Activated CD4-positive, alpha-beta T cell treated with anti-CD3 and anti-CD28 coated beads for 36 hours (primary cell): ENCODE measurements at regions of chr6 and their contacts with region 1.

Region 1: GRCh38 chr6:33812669-33813068 is 8.9 kb upstream of the MLN start:
- DNase-seq: peak; percentile 67
- ATAC-seq: no peak
- H3K4me3 Mint-ChIP-seq: no peak overlapping the region
- H3K27ac Mint-ChIP-seq: no peak overlapping the region
- H3K4me1 Mint-ChIP-seq: peaks cover 15% of the 10 kb centered on the region
- H3K27me3 Mint-ChIP-seq: peaks cover 49% of the 10 kb centered on the region

Region 2: DNA sequence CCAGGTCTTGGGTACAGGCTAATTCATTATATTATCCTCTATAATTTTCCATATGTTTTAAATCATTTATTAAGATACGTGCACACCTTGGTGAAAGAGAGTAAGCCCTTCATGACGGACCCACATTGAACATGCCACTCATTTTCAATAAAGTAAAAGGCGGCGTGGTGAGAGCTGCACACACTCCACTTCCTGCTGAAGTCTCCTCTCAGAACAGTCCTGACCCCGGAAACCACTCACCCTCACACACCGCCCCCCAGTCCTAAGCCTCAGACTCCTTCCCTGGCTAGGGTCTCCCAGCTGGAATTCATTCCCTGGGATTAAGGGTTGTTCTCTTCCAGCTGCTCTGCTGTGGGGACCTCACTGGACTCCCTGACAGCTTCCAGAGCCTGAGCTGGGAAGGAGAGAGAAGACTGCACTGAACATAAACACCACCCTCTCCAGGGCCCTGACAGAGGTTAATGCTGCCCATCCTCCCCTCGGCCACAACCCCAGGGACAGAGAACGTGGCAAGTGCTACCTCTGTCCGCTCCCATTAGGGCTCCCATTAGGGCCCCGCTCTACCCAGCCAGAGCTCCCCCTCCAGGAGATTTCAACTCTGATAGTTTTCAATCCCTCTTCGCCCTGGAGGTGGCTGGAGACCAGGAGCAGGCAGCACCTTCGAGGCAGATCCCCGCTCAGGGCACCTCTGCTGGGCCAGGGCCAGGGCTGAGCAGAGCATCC is 308.4 kb after region 1 on chr6:
- CTCF ChIA-PET with region 1: no interaction called
- POLR2A ChIA-PET with region 1: no interaction called
- intact Hi-C with region 1: loop called in 1 of 2 experiments (anchors 5 kb)
- DNase-seq: no peak
- ATAC-seq: no peak
- H3K4me3 Mint-ChIP-seq: no peak overlapping the region
- H3K27ac Mint-ChIP-seq: no peak overlapping the region
- H3K4me1 Mint-ChIP-seq: no peaks in the 10 kb centered on the region
- H3K27me3 Mint-ChIP-seq: no peaks in the 10 kb centered on the region

Region 3: DNA sequence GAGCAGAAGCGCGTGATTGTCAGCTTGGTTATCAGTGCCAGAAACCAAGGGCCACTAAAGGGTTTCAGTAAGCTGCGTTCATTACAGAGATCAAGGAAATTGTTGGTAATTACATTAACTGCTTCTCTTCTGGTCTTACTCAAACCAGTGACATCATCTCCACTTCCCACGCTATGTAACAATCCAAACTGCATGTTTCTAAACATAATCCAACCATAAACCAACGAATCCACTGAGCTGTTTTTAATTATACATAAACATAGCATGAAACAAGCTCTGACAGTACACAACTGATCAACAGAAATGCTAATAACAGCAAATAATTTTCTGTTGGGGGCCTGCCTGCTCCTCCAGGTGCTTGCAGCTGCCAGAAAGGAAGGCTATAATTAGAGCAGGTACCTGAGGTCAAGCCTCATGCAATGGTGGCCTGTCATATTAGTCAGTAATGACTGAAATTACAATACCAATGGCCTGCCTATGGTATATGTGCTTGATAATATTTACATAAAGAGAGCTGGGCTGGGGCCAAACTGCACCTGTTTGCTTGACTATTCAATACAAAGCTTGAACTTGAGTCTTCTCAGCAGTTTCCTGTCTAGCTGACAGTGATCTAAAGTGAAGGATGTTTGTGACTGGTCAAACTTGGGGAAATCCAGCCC is 843.8 kb after region 1 on chr6:
- CTCF ChIA-PET with region 1: no interaction called
- POLR2A ChIA-PET with region 1: no interaction called
- intact Hi-C with region 1: no loop called
- DNase-seq: peak; percentile 74
- ATAC-seq: peak; percentile 94
- H3K4me3 Mint-ChIP-seq: peak overlapping the region; percentile 58
- H3K27ac Mint-ChIP-seq: peak overlapping the region; percentile 90
- H3K4me1 Mint-ChIP-seq: peaks cover 55% of the 10 kb centered on the region
- H3K27me3 Mint-ChIP-seq: no peaks in the 10 kb centered on the region